ENCODE measurements at regions of chr11 and their contacts with region 1.

Region 1: DNA sequence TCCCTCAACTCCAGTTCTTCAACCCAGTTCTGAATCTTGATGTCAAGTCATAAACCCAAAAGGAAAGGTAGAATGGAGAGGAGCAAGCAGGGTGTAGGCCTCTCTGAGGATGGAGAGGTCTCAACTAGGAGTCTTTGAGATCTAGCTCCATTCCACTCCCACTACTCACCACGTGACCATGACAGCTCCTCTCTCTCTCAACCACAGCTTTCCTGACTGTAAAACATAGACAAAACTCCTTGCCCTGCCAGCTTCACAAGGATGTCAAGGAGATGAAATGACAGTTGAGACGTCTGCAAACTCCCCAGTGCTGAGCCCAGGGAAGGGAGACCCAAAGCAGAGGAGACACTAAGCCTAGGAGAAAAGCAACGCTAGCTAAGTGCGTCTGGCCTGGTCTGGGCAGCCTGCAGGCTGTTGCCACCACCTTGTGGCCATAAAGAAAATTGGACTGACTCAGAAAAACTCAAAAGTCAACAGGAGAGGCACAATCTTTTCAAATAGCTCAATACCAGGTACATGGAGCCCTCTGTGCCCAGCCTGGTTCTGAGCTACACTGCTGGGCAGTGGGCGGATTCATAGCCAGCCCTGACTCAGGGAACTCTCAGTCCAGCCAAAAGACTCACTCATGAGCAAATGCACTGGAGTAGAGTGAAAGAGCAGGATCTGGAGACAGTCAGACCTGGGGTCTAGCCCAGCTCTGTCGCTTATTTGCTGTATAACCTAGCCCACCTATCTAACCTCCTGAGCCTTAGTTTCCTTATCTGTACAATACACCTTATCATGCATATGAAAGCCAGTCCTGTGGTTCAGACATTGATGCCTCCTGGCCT is 3.4 kb downstream of the CLPB start:
- DNase-seq: peak; percentile 72
- H3K4me3 ChIP-seq: no peak overlapping the region
- H3K27ac ChIP-seq: no peak overlapping the region
- H3K4me1 ChIP-seq: peaks cover 20% of the 10 kb centered on the region
- CTCF ChIP-seq: peak; percentile 90

Region 2: DNA sequence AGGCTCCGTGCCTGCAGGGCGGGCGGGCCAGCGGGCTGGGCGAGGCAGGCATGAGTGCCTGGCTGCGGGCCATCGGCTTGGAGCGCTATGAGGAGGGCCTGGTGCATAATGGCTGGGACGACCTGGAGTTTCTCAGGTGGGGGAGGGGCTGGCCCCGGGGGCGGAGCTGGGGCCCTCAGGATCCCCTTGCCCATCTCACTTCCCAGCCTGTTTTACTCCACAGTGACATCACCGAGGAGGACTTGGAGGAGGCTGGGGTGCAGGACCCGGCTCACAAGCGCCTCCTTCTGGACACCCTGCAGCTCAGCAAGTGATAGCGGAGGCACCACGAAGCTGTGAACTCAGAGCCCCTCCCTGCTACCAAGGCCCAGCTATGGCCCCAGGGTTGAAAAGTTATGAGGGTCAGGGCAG is 192.9 kb before region 1 on chr11:
- CTCF ChIA-PET with region 1: no interaction called
- POLR2A ChIA-PET with region 1: no interaction called
- intact Hi-C with region 1: loop called (anchors 5 kb)
- DNase-seq: peak; percentile 72
- H3K4me3 ChIP-seq: no peak overlapping the region
- H3K27ac ChIP-seq: no peak overlapping the region
- H3K4me1 ChIP-seq: no peaks in the 10 kb centered on the region
- CTCF ChIP-seq: peak; percentile 88

Region 3: DNA sequence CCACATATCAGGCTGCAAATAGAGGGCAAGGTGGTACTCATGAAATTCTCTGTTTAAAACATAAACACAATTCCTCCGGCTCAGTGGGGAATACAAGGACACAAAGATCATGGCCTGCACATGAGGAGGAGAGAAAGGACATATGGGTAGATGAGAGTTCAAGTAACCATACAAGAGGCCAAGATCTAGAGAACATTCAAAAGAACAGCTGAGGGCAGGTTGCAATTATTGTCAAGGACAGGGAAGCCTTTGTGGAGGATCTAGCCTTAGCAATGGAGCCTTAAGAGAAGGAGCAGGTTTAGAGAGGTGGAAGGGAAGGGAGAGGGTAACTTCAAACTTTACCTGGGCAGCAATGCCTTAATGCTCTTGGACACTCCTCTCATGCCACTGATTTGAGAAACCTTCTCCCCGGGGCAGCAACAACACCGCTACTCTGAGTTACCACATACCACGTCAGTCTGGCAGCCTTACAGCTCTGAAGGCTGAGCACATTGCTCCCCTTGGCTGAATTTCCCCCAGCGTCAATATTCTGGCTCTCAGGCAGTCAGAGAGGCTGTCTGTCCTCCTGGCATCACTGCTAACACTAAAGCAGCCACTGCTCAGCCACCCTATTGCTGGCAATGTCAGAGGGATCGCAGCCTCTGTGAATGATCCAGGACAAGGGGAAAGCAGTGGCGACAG is 52.1 kb before region 1 on chr11:
- CTCF ChIA-PET with region 1: no interaction called
- POLR2A ChIA-PET with region 1: no interaction called
- intact Hi-C with region 1: no loop called
- DNase-seq: no peak
- H3K4me3 ChIP-seq: no peak overlapping the region
- H3K27ac ChIP-seq: no peak overlapping the region
- H3K4me1 ChIP-seq: no peaks in the 10 kb centered on the region
- CTCF ChIP-seq: no peak

Region 4: DNA sequence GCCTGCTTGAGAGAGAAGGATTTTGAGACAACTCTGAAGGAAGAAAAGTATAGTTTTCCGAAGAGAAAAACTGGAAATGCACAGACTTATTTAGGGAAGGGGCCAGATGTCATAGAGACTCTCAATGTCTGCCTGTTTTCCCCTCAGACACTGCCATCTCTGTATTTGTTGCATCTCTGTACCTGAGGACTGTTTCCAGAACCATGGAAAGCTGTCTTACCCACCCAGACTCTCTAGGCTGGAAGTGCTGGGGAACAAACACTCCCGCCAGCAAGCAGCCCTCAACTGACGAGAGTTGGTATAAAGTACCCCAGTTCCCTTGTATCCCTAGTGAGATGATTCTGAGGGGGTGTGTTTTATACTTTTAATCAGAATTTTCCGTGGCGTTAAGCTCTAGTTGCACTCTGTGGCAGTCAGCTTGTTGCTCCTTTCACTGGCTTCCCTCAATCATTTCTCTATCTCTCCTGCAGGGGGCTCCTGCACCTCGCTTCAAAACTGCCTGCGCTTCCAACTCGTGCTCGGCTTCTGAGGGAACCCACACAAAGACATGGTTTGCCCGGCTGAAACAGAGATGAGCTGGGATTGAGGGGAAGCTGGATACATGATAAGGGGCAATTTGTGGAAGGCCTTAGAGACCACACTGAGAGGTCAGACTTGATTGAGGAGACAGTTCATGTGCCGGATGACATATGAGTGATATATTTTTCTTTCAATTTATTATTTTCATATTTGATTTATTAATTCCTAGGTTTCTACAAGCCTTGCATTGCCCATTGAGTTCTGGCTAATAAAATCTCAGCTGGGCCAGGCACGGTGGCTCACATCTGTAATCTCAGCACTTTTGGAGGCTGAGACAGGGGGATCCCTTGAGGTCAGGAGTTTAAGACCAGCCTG is 40.3 kb after region 1 on chr11:
- CTCF ChIA-PET with region 1: no interaction called
- POLR2A ChIA-PET with region 1: no interaction called
- intact Hi-C with region 1: no loop called
- DNase-seq: peak; percentile 66
- H3K4me3 ChIP-seq: no peak overlapping the region
- H3K27ac ChIP-seq: no peak overlapping the region
- H3K4me1 ChIP-seq: no peaks in the 10 kb centered on the region
- CTCF ChIP-seq: peak; percentile 92

Region 5: DNA sequence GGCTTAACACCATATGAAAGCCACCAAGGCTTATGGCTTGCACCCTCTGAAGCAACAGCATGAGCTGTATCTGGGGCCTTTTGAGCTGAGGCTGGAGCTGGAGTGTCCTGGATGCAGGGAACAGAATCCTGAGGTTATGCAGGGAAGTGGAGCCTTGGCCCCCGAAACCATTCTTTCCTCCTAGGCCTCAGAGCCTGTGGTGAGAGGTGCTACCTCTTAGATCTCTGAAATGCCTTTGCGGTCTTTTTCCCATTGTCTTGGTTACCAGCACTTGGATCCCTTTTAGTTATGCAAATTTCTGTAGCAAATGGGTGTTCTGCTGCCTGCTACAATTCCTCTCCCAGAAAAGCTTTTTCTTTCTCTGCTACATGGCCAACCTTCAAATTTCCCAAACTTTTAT is 76.1 kb after region 1 on chr11:
- CTCF ChIA-PET with region 1: no interaction called
- POLR2A ChIA-PET with region 1: no interaction called
- intact Hi-C with region 1: no loop called
- DNase-seq: no peak
- H3K4me3 ChIP-seq: no peak overlapping the region
- H3K27ac ChIP-seq: no peak overlapping the region
- H3K4me1 ChIP-seq: no peaks in the 10 kb centered on the region
- CTCF ChIP-seq: no peak

Region 6: DNA sequence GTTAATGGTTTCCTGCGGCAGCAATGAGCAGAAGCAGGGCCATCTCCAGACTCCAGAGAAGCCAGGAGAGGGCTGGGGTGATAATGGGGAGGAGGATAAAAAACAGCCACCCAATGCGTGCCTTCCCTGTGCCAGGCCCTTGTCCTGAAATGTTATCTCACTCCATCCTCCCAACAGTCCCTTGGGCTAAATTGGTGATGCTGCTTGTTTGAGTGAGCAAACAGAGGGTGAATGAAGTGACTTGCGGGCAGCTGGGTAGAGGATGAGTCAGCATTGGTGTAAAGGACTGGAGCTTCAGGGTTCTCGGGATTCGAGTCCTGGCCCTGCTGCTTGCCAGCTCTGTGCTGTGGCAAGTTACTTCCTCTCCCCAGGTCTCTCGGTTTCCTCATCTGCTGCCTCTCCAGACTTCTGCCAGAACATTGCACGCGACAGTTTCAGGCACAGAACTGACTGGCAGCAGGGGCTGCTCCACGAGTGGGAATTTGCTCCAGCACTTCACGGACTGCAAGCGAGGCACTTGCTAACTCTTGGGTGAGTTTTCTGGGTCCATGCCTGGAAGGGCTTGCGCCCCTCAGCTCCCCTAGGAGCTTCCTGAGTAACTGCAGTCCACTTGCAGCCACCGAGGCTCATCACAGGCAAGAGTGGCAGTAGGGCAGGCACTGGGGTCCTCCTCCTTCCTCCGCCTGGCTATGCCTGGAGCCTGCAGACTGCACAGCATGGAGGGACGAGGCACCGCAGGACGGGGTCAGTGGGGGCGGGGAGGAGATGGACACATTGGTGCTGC is 841.2 kb after region 1 on chr11 and contains the start of gene P2RY6:
- CTCF ChIA-PET with region 1: no interaction called
- POLR2A ChIA-PET with region 1: no interaction called
- intact Hi-C with region 1: no loop called
- DNase-seq: no peak
- H3K4me3 ChIP-seq: no peak within 1 kb of the TSS
- H3K27ac ChIP-seq: no peak within 1 kb of the TSS
- H3K4me1 ChIP-seq: peaks cover 26% of the 10 kb centered on the region
- CTCF ChIP-seq: no peak
- total RNA-seq, gene P2RY6: not detected in 2 replicates

Measured in OCI-LY7 (cell line).